Posterior cingulate gyrus (tissue), 11 donors: ENCODE measurements at regions of chr12 and their contacts with region 1.

Region 1: GRCh38 chr12:96219698-96220206 is 25.6 kb downstream of the ELK3 start:
- DNase-seq: no peak

Region 2: DNA sequence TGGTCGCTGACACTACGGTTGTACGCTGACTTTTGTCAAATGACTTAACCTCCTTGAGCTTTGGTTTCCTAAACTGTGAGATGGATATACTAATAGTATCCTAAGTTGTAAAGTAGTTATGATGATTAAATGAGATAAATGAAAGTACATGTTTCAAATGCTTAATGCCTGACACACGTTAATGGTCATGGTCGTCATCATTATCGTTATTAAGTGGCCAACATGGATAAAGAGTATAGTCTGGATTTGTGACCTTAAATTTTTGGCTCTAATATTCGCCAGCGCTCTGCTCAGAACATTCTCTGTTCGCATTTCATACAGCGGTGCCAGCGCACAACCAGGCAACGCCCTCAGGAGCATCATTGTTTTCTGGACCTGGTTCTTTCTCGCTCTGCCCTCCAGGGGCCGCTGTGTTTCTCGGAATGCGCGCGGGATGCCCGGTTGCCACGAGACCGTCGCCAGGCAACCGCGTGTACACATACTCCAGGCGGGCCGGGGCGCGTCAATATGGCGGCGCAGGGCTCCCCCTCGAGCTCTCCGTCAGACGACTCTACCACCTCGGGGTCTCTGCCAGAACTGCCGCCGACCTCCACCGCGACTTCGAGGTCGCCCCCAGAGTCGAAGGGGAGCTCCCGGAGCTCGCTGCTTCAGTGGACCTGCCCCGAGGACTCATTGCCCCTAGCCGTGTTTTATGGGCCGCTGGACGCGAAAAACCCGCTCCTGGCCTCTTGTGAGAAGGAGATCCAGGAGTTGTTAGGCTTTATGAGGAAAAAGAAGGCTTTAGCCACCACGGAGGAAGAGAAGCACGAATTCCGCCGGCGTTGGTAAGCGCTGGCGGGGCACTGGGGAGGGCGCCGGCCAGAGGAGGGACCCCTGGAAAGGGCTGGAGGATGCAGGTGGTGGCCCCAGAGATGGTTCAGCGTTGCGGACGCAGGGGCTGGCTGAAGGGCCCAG is 269.6 kb after region 1 on chr12 and contains the start of gene CFAP54:
- intact Hi-C with region 1: loop called (anchors 10 kb)
- DNase-seq: peak; percentile 86 to 99 (median 94)

Region 3: DNA sequence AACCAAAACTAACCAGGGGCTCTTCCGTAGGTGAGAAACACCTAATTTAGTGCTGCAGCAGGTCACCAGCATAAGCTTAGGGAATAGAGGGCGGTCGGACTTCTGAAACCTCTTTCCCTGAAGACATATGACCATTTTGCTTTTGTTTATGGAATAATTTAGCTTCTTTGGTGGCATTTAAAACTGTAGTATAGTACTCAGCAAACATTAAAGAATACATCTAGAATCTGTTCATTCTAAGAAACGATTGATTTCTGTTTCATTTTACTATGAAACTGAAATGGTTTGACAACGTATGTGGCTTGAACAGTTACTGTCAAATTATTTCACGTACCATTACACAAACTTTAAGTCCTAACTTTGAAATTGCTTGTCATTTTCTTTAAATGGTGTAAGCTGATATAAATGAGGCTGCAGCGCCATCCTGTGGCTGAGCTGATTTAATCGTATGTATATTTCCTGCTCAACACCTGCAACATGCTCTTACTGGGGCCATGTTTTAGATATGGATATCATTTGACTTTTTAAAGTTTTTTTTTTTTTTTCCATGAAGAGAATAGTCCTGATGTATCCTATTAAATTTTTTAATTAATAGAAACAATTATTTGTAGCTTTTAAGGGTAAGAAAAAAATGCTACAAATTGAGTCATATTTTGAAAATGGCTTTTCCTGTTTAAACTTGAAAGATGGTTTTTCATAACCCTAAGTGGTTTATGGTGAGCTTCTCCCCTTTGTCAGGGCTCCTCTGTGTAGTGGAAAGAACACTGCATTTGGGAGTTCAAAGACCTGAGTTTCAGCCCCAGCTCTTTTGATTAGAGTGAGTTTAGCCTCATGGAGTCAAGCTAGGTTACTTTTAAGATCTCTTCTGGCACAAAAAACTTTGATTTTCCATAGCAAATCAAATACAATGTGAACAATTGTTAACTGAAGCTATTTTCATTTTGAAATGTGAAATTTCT is 297.0 kb after region 1 on chr12:
- intact Hi-C with region 1: loop called (anchors 5 kb)
- DNase-seq: peak; percentile 45 to 94 (median 76)